ENCODE measurements at regions of chr17 and their contacts with region 1.

Region 1: DNA sequence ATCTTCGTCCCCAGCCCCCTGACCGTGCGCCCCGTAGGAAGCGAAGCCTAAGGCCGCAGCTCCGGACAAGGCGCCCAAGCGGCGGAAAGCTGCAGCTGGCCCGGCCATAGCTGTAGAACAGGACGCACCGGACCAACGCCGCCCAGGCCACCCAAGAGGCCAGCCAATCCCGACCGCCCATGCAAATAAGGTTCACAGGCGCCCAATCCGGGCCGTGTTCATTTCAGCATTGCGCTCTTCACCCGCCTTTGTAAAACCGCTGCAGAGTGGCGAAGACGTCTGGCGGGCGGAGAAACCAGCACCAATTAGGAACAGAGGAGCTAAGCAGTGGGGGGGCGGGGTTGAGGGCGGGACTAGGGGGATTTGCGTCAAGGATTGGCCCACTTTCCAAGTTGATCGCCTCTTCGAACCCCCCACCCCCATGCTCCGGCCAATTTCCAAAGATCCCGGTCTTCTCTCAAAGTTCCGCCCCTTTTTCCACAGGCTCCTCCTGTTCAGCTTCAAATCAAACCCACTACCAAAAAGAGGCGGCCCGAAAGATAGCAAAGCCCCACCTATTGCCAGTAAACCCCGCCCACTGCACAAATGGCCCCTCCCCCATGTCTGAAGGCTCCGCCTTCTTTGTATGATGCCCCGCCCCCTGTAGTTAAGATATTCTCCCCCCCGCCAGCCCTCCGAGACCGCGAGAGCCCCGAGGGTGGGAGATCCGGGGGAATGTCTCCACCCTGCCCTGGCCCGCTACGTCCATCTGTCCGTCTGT is at the start of gene TMEM256:
- DNase-seq: peak; percentile 96 to 99
- H3K4me3 ChIP-seq: peak within 1 kb of the TSS; percentile 76
- H3K27ac ChIP-seq: peak within 1 kb of the TSS; percentile 51; the same call in 1 of the 2 replicates
- H3K4me1 ChIP-seq: peaks cover 15% of the 10 kb centered on the region
- H3K27me3 ChIP-seq: no peaks in the 10 kb centered on the region
- CTCF ChIP-seq: no peak
- total RNA-seq, gene TMEM256: 55.4 and 91.7 TPM in 2 replicates

Region 2: GRCh38 chr17:7014261-7014994 is 389.7 kb before region 1 on chr17:
- CTCF ChIA-PET with region 1: no interaction called
- POLR2A ChIA-PET with region 1: interaction called, 14 read pairs
- intact Hi-C with region 1: no loop called
- DNase-seq: peak; percentile 91 to 99
- H3K4me3 ChIP-seq: peak overlapping the region; percentile 97
- H3K27ac ChIP-seq: peak overlapping the region; percentile 81
- H3K4me1 ChIP-seq: peaks cover 21% of the 10 kb centered on the region
- H3K27me3 ChIP-seq: no peaks in the 10 kb centered on the region
- CTCF ChIP-seq: peak; percentile 72

Region 3: GRCh38 chr17:7252176-7253043 is 151.7 kb before region 1 on chr17 and contains the start of gene ELP5:
- CTCF ChIA-PET with region 1: no interaction called
- POLR2A ChIA-PET with region 1: interaction called, 10 read pairs
- intact Hi-C with region 1: no loop called
- DNase-seq: peak; percentile 89 to 95
- H3K4me3 ChIP-seq: peak within 1 kb of the TSS; percentile 72
- H3K27ac ChIP-seq: peak within 1 kb of the TSS; percentile 89
- H3K4me1 ChIP-seq: peaks cover 28% of the 10 kb centered on the region
- H3K27me3 ChIP-seq: no peaks in the 10 kb centered on the region
- CTCF ChIP-seq: peak; percentile 31; the same call in 1 of the 2 replicates
- total RNA-seq, gene ELP5: 31.8 and 45.1 TPM in 2 replicates

Region 4: DNA sequence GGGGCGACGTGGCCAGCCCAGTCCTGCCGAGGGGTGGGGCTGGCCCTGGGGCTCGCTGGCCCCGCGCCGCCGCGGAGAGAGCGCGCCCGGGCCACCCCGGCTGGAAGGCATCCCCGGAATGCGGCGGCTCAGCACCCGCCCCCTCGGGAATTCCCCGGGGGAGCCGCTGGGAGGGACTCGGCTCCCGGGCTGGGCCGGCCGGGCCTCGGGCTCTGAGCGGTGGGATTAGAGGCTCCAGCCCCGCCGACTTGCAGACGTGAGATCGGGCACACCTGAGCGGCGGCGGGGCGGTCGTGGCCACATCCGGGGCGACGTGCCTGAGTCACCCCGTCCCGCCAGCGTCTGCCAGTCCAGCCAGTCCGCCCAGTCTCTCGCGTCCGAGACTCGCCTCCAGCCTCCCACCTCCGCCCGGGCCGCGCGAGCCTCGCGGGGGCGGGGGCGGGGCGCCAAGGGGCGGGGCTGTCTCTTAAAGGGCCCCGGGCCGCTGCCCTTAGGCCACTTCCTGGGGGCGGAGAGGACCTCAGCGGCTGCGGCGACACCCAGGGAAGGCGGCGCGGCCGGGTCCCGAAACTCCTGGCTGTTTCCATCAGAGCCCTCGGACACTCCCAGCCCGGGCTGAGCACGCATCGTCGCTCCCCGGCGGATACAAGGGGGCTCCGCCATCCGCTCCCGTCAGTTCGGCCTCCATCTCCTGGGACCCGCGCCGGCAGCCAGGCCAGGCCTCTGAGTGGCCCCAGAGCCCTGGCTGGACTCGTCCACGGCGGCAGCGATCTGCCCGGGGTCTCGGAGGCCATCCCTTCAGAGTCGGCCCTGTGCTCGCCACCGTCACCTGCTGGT is 52.3 kb before region 1 on chr17 and contains the start of gene KCTD11:
- CTCF ChIA-PET with region 1: interaction called, 3 read pairs
- POLR2A ChIA-PET with region 1: interaction called, 8 read pairs
- intact Hi-C with region 1: loop called (anchors 5 kb)
- DNase-seq: peak; percentile 92 to 99
- H3K4me3 ChIP-seq: peak within 1 kb of the TSS; percentile 86
- H3K27ac ChIP-seq: peak within 1 kb of the TSS; percentile 98
- H3K4me1 ChIP-seq: peaks cover 28% of the 10 kb centered on the region
- H3K27me3 ChIP-seq: no peaks in the 10 kb centered on the region
- CTCF ChIP-seq: no peak; the same call in 1 of the 2 replicates
- total RNA-seq, gene KCTD11: 16.4 and 18.3 TPM in 2 replicates

Region 5: DNA sequence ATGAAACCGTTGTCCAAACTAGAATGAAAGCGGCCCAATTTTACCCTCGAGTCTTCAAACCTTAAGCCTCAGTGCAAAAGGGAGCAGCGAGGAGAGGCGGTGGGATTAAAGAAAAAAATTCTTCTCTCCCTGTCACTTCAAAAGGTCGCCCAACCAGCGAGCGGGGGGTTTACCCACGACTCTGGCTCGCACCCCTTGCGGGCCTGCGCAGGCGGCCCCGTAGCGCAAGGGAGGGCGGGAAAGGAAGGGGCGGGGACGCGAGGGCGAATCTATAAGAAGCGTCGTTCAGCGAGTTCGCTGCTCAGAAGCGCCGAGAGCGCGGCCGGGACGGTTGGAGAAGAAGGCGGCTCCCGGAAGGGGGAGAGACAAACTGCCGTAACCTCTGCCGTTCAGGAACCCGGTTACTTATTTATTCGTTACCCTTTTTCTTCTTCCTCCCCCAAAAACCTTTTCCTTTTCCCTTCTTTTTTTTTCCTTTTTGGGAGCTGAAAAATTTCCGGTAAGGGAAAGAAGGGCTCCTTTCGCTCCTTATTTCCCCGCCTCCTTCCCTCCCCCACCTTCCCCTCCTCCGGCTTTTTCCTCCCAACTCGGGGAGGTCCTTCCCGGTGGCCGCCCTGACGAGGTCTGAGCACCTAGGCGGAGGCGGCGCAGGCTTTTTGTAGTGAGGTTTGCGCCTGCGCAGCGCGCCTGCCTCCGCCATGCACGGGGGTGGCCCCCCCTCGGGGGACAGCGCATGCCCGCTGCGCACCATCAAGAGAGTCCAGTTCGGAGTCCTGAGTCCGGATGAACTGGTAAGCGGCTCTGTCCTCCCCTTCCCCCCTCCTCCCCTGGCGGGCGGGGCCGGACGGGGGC is 80.1 kb after region 1 on chr17 and contains the start of gene POLR2A:
- CTCF ChIA-PET with region 1: no interaction called
- POLR2A ChIA-PET with region 1: interaction called, 4 read pairs
- intact Hi-C with region 1: loop called (anchors 1 kb)
- DNase-seq: peak; percentile 79 to 99
- H3K4me3 ChIP-seq: peak within 1 kb of the TSS; percentile 88
- H3K27ac ChIP-seq: peak within 1 kb of the TSS; percentile 95
- H3K4me1 ChIP-seq: peaks cover 18% of the 10 kb centered on the region
- H3K27me3 ChIP-seq: no peaks in the 10 kb centered on the region
- CTCF ChIP-seq: no peak
- total RNA-seq, gene POLR2A: 149 and 166 TPM in 2 replicates

Region 6: GRCh38 chr17:7508190-7508589 is 104.0 kb after region 1 on chr17:
- CTCF ChIA-PET with region 1: no interaction called
- POLR2A ChIA-PET with region 1: no interaction called
- intact Hi-C with region 1: no loop called
- DNase-seq: no peak
- H3K4me3 ChIP-seq: no peak overlapping the region
- H3K27ac ChIP-seq: no peak overlapping the region
- H3K4me1 ChIP-seq: no peaks in the 10 kb centered on the region
- H3K27me3 ChIP-seq: no peaks in the 10 kb centered on the region
- CTCF ChIP-seq: no peak

Region 7: GRCh38 chr17:7834962-7835813 is 431.0 kb after region 1 on chr17:
- CTCF ChIA-PET with region 1: no interaction called
- POLR2A ChIA-PET with region 1: no interaction called
- intact Hi-C with region 1: loop called (anchors 5 kb)
- DNase-seq: peak; percentile 84 to 96
- H3K4me3 ChIP-seq: peak overlapping the region; percentile 82
- H3K27ac ChIP-seq: 0 out of 2 replicates have a peak overlapping the region, but pooled peaks have one; percentile 23
- H3K4me1 ChIP-seq: peaks cover 18% of the 10 kb centered on the region
- H3K27me3 ChIP-seq: no peaks in the 10 kb centered on the region
- CTCF ChIP-seq: peak; percentile 63; the same call in 1 of the 2 replicates

Measured in PC-9 (cell line).